Naive thymus-derived CD4-positive, alpha-beta T cell (primary cell): ENCODE measurements at regions of chr17 and their contacts with region 1.

Region 1: GRCh38 chr17:64020056-64020766 is at the start of gene ICAM2:
- DNase-seq: peak; percentile 73 to 97 (median 96)
- ATAC-seq: peak; percentile 90
- H3K4me3 ChIP-seq: peak within 1 kb of the TSS; percentile 94
- H3K4me3 Mint-ChIP-seq: peak within 1 kb of the TSS; percentile 91 to 100 (median 98)
- H3K27ac ChIP-seq: peak within 1 kb of the TSS; percentile 96
- H3K27ac Mint-ChIP-seq: peak within 1 kb of the TSS; percentile 91 to 100 (median 100)
- H3K4me1 ChIP-seq: peaks cover 57 to 68% of the 10 kb centered on the region in 2 donors
- H3K4me1 Mint-ChIP-seq: peaks cover 45 to 79% (median 71%) of the 10 kb centered on the region in 7 donors
- H3K27me3 ChIP-seq: no peaks in the 10 kb centered on the region
- H3K27me3 Mint-ChIP-seq: peaks cover 0 to 2% (median 0%) of the 10 kb centered on the region in 5 donors
- total RNA-seq, gene ICAM2: 60.9 to 132 (median 92.3) TPM

Region 2: GRCh38 chr17:63842540-63843386 is 177.4 kb before region 1 on chr17 and contains the start of gene SMARCD2:
- CTCF ChIA-PET with region 1: no interaction called
- POLR2A ChIA-PET with region 1: interaction called, 6 read pairs
- intact Hi-C with region 1: loop called in 1 of 2 experiments (anchors 1 kb)
- DNase-seq: peak; percentile 94 to 99 (median 98)
- ATAC-seq: peak; percentile 96
- H3K4me3 ChIP-seq: peak within 1 kb of the TSS; percentile 87
- H3K4me3 Mint-ChIP-seq: peak within 1 kb of the TSS; percentile 92 to 98 (median 95)
- H3K27ac ChIP-seq: peak within 1 kb of the TSS; percentile 96
- H3K27ac Mint-ChIP-seq: peak within 1 kb of the TSS; percentile 87 to 95 (median 92)
- H3K4me1 ChIP-seq: peaks cover 34 to 36% of the 10 kb centered on the region in 2 donors
- H3K4me1 Mint-ChIP-seq: peaks cover 27 to 52% (median 44%) of the 10 kb centered on the region in 7 donors
- H3K27me3 ChIP-seq: no peaks in the 10 kb centered on the region
- H3K27me3 Mint-ChIP-seq: no peaks in the 10 kb centered on the region
- total RNA-seq, gene SMARCD2: 102 to 148 (median 109) TPM

Region 3: GRCh38 chr17:63919311-63919723 is 100.9 kb before region 1 on chr17:
- CTCF ChIA-PET with region 1: interaction called, 85 read pairs
- POLR2A ChIA-PET with region 1: interaction called, 16 read pairs
- intact Hi-C with region 1: loop called (anchors 1 kb)
- DNase-seq: peak; percentile 53 to 81 (median 68)
- ATAC-seq: peak; percentile 97
- H3K4me3 ChIP-seq: no peak overlapping the region
- H3K4me3 Mint-ChIP-seq: no peak overlapping the region
- H3K27ac ChIP-seq: no peak overlapping the region
- H3K27ac Mint-ChIP-seq: peak overlapping the region in 8 of 9 donors; percentile 3 to 86 (median 8)
- H3K4me1 ChIP-seq: peaks cover 0 to 4% of the 10 kb centered on the region in 2 donors
- H3K4me1 Mint-ChIP-seq: peaks cover 5 to 10% (median 9%) of the 10 kb centered on the region in 7 donors
- H3K27me3 ChIP-seq: no peaks in the 10 kb centered on the region
- H3K27me3 Mint-ChIP-seq: peaks cover 0 to 16% (median 0%) of the 10 kb centered on the region in 5 donors

Region 4: GRCh38 chr17:63984651-63985386 is 35.4 kb before region 1 on chr17:
- CTCF ChIA-PET with region 1: interaction called, 14 read pairs
- POLR2A ChIA-PET with region 1: interaction called, 11 read pairs
- intact Hi-C with region 1: loop called (anchors 1 kb)
- DNase-seq: peak in 5 of 9 donors; percentile 18 to 62 (median 34)
- ATAC-seq: peak; percentile 92
- H3K4me3 ChIP-seq: no peak overlapping the region
- H3K4me3 Mint-ChIP-seq: peak overlapping the region in 1 of 10 donors; percentile 62
- H3K27ac ChIP-seq: no peak overlapping the region
- H3K27ac Mint-ChIP-seq: peak overlapping the region in 7 of 9 donors; percentile 28 to 85 (median 69)
- H3K4me1 ChIP-seq: peaks cover 4 to 9% of the 10 kb centered on the region in 2 donors
- H3K4me1 Mint-ChIP-seq: peaks cover 8 to 24% (median 15%) of the 10 kb centered on the region in 7 donors
- H3K27me3 ChIP-seq: no peaks in the 10 kb centered on the region
- H3K27me3 Mint-ChIP-seq: no peaks in the 10 kb centered on the region

Region 5: GRCh38 chr17:64005734-64006167 is 14.5 kb before region 1 on chr17:
- CTCF ChIA-PET with region 1: interaction called, 10 read pairs
- POLR2A ChIA-PET with region 1: interaction called, 58 read pairs
- intact Hi-C with region 1: no loop called
- DNase-seq: no peak
- ATAC-seq: no peak
- H3K4me3 ChIP-seq: no peak overlapping the region
- H3K4me3 Mint-ChIP-seq: peak overlapping the region in 2 of 10 donors; percentile 25 to 48
- H3K27ac ChIP-seq: peak overlapping the region; percentile 59
- H3K27ac Mint-ChIP-seq: peak overlapping the region in 8 of 9 donors; percentile 67 to 87 (median 82)
- H3K4me1 ChIP-seq: peaks cover 26 to 27% of the 10 kb centered on the region in 2 donors
- H3K4me1 Mint-ChIP-seq: peaks cover 24 to 57% (median 49%) of the 10 kb centered on the region in 7 donors
- H3K27me3 ChIP-seq: no peaks in the 10 kb centered on the region
- H3K27me3 Mint-ChIP-seq: no peaks in the 10 kb centered on the region

Region 6: GRCh38 chr17:64051153-64051552 is 30.9 kb after region 1 on chr17:
- CTCF ChIA-PET with region 1: interaction called, 16 read pairs
- POLR2A ChIA-PET with region 1: interaction called, 19 read pairs
- intact Hi-C with region 1: loop called (anchors 1 to 2 kb)
- DNase-seq: peak in 7 of 9 donors; percentile 58 to 86 (median 76)
- ATAC-seq: peak; percentile 99
- H3K4me3 ChIP-seq: peak overlapping the region; percentile 19
- H3K4me3 Mint-ChIP-seq: peak overlapping the region; percentile 1 to 73 (median 60)
- H3K27ac ChIP-seq: peak overlapping the region; percentile 55
- H3K27ac Mint-ChIP-seq: peak overlapping the region; percentile 86 to 97 (median 95)
- H3K4me1 ChIP-seq: peaks cover 32 to 37% of the 10 kb centered on the region in 2 donors
- H3K4me1 Mint-ChIP-seq: peaks cover 26 to 52% (median 43%) of the 10 kb centered on the region in 7 donors
- H3K27me3 ChIP-seq: no peaks in the 10 kb centered on the region
- H3K27me3 Mint-ChIP-seq: no peaks in the 10 kb centered on the region

Region 7: DNA sequence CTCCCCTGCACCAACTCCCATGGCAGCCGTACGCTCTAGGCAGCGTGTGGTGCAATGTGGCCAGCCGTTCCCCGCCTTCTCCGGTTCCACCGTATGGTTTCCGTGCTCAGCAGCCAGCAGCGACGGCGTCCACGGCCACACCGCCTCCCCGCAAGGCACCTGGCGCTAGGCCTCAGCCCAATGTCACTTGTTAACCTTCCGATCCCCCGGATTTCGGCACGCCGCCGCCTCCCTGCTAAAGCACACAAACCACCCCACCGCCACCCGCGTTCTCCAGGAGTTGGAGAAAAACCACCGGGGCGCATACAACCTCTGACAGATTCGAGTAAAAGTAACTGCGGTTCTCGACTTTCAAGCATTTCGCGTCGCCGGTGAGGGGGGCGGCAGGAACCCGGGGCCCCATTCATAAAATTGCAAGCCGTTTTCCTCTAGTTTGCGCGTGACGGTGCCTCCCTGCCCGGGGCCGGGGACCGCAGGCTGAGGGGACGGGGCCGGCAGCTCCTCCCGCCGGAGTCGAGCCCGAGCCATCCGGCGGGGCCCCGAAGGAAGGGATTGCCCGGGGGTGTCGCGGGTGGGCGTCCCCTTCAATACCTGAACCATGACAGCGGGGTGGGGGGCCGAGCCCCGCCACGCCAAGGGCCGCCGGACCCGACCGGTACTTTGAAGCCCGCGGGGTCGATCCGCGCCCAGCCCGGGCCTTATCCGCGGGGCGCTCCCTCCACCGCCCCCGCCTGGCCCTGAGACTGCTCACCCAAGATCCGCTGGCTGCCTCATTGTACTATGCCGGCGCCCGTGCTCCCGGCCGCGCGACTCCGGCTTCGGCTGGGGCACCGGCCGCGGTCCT is 242.4 kb after region 1 on chr17 and contains the start of gene TEX2:
- CTCF ChIA-PET with region 1: no interaction called
- POLR2A ChIA-PET with region 1: interaction called, 6 read pairs
- intact Hi-C with region 1: loop called (anchors 2 kb)
- DNase-seq: peak; percentile 44 to 82 (median 74)
- ATAC-seq: peak; percentile 56
- H3K4me3 ChIP-seq: peak within 1 kb of the TSS; percentile 99
- H3K4me3 Mint-ChIP-seq: peak within 1 kb of the TSS; percentile 87 to 98 (median 94)
- H3K27ac ChIP-seq: peak within 1 kb of the TSS; percentile 90
- H3K27ac Mint-ChIP-seq: peak within 1 kb of the TSS; percentile 87 to 98 (median 93)
- H3K4me1 ChIP-seq: peaks cover 18% of the 10 kb centered on the region in 2 donors
- H3K4me1 Mint-ChIP-seq: peaks cover 22 to 50% (median 42%) of the 10 kb centered on the region in 7 donors
- H3K27me3 ChIP-seq: no peaks in the 10 kb centered on the region
- H3K27me3 Mint-ChIP-seq: peaks cover 0 to 11% (median 5%) of the 10 kb centered on the region in 5 donors
- total RNA-seq, gene TEX2: 14.1 to 24.2 (median 14.4) TPM

Region 8: DNA sequence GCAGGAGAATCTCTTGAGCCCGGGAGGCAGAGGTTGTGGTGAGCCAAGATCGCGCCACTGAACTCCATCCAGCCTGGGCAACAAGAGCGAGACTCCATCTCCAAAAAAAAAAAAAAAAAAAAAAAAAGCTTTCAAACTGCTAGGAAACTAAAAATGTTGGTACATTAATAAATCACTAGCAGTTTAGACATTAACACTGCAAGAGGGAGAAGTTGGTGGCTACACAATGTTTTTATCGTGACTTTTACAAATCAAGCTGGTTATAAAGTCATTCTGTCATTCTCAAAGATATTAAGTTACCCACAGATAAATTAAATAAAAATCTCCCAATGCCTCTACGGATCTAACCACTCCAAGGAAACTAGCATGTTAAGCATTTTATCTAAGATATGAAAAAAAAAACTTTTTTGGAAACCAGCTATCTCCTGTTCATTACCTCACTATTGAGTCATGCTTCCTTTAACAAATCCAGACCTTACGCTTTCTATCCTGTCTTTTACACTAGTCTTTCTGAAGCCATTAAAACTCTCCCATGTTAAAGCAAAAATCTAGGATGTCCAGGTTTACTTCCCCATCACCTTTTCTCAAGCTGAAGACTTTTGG is 727.8 kb after region 1 on chr17:
- CTCF ChIA-PET with region 1: no interaction called
- POLR2A ChIA-PET with region 1: no interaction called
- intact Hi-C with region 1: no loop called
- DNase-seq: no peak
- ATAC-seq: no peak
- H3K4me3 ChIP-seq: no peak overlapping the region
- H3K4me3 Mint-ChIP-seq: no peak overlapping the region
- H3K27ac ChIP-seq: no peak overlapping the region
- H3K27ac Mint-ChIP-seq: peak overlapping the region in 1 of 9 donors; percentile 68
- H3K4me1 ChIP-seq: no peaks in the 10 kb centered on the region
- H3K4me1 Mint-ChIP-seq: peaks cover 0 to 4% (median 0%) of the 10 kb centered on the region in 7 donors
- H3K27me3 ChIP-seq: no peaks in the 10 kb centered on the region
- H3K27me3 Mint-ChIP-seq: no peaks in the 10 kb centered on the region